AG04449 (cell line): ENCODE measurements at regions of chr10 and their contacts with region 1.

Region 1: GRCh38 chr10:133608855-133609254 is 17.7 kb downstream of the FRG2B start:
- DNase-seq: no peak
- H3K4me3 ChIP-seq: no peak overlapping the region
- CTCF ChIP-seq: peak; percentile 19

Region 2: DNA sequence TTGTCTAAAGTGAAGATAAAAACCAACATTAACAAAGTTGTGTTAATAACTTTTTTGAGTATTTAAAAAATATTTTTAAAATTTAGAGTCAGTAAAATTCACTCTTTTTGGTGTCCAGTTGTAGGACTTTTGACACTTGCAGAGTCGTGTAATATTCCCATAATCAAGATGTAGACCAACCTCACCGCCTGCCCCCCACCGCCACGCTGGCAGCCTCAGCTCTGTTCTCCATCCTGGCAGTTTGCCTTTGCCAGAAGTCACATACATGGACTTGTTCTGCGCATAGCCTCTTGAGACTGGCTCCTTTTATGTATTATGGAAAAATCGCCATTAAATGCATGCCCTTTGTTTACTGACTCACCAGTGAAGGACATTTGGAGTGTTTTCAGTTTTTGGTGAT is 16.1 kb before region 1 on chr10:
- CTCF ChIA-PET with region 1: interaction called, 12 read pairs
- POLR2A ChIA-PET with region 1: no interaction called
- DNase-seq: no peak
- H3K4me3 ChIP-seq: no peak overlapping the region
- CTCF ChIP-seq: no peak